ENCODE measurements at regions of chr22 and their contacts with region 1.

Region 1: DNA sequence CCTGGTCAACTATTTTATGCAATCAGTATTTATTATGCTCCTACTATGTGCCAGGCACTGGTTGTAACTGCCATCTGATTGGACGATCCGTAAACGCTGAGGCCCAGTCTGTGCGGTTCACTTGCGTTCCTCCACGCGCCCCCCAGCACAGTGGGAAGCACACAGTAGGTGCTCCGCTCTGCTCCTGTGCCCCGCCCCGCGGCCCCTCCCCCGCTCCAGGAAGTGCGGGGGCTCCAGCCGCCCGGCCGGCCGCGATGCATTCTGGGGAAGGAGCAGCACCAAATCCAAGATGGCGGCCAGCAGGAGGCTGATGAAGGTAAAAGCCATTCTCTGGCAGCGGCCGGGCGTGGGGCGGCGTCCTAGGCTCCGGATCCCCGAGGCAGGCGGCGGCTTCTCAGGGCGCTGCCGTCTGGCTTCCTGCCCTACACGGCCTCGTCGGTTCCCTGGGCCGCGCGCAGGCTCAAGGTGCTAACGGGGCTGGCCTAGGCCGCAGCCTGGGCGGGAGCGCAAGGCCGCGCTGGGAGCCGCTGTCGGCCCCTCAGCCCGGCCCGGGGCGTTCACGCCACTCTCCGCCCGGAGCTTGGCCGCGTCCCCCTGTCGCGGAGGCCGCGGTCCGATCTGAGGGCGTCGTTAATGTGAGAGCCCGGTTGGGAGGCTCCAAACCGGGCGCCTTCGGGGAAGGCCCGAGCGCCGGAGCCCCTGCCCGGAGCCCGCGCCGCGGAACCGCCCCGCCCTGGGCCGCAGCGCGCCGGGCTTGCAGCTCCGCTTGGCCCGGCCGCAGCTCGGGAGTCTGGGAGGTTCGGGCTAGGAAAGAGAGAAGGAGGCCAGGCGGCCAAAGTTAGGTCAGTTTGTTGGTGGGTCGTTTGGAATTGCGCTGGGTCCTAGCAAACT is at the start of gene UBE2L3:
- DNase-seq: peak; percentile 91
- H3K4me3 ChIP-seq: peak within 1 kb of the TSS; percentile 89
- H3K27ac ChIP-seq: peak within 1 kb of the TSS; percentile 83
- H3K4me1 ChIP-seq: peaks cover 28% of the 10 kb centered on the region
- H3K27me3 ChIP-seq: no peaks in the 10 kb centered on the region
- total RNA-seq, gene UBE2L3: 41.9 and 57.2 TPM in 2 replicates

Region 2: DNA sequence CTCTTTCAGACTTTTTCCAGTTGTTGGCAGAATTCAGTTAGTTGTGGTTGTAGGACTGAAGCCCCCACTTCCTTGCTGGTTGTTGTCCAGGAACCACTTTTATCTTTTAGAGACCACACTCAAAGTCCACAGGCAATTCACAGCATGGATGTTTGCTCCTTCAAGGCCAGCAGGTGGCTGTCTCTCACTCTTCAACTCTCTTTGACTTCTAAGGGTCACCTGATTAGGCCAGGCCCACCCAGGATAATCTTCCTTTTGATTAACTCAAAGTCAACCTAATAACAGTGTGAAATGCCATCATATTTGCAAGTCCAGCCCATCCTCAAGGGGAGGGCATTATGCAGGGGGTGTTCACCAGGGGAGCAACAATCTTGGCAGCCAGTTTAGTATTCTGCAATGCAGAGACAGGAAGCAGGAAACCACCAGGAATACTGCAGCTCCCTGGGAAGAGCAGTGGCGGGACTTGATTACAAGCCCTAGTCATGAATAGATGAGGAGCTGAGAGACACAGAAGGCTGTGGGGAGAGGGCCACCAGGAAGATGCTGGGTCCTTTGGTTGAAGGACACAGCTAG is 469.5 kb before region 1 on chr22:
- in situ Hi-C with region 1: loop called (anchors 25 kb)
- DNase-seq: no peak
- H3K4me3 ChIP-seq: no peak overlapping the region
- H3K27ac ChIP-seq: no peak overlapping the region
- H3K4me1 ChIP-seq: peaks cover 31% of the 10 kb centered on the region
- H3K27me3 ChIP-seq: no peaks in the 10 kb centered on the region; the same call in 1 of the 2 replicates

Region 3: DNA sequence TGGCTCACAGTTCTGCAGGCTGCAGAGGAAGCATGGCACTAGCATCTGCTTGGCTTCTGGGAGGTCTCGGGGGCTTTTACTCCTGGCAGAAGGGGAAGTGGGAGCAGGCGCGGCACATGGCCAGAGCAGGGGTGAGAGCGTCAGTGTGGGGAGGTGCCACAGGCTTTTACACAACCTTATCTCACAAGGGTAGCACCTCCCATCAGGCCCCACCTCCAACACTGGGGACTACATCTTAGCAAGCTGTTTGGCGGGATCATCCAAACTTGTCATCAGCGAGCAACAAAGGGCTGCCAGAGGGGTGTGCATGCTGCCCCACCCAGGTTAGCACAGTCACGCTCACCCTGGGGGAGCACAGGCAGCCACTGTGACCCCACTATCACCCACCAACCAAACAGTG is 186.8 kb after region 1 on chr22:
- in situ Hi-C with region 1: no loop called
- DNase-seq: peak; percentile 44
- H3K4me3 ChIP-seq: no peak overlapping the region
- H3K27ac ChIP-seq: peak overlapping the region; percentile 93; the same call in 1 of the 2 replicates
- H3K4me1 ChIP-seq: peaks cover 25% of the 10 kb centered on the region
- H3K27me3 ChIP-seq: no peaks in the 10 kb centered on the region